CD8-positive, alpha-beta T cell (primary cell): ENCODE measurements at regions of chr4 and their contacts with region 1.

Region 1: DNA sequence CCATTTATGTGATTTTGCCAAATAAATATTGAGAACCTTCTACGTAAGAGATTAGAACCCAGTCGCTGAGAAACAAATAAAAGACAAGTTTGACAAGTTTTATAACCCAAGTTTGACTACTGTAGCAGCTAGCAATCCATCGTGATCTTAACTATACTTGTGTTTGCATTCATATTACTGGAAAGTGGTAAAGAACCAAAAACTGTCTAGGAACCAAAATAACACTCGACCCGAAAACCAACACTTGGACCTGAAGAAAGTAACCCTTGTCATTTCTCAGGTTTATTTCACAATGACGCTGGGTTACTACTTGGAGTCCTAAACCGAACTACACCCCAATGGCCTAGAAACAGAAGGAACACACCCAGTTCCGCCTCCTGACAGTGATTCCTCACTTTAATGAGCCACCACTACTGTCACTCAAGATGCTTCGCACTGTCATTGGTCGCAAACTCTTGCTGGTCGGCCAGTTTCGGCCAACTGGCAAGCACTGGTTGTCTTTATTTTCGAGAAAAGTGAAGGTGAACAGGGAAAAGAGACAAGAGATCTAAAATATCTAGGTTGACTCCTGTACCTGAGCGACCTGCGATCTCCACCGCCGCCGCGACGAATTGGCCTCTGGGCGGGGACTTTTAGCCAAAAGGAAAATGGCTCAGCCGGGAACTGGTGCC is 496 bp downstream of the FBXO8 start:
- DNase-seq: peak; percentile 61 to 94 (median 80)
- ATAC-seq: peak; percentile 93
- H3K4me3 ChIP-seq: peak overlapping the region; percentile 88 to 99
- H3K4me3 Mint-ChIP-seq: peak overlapping the region; percentile 100
- H3K27ac ChIP-seq: peak overlapping the region; percentile 98 to 100
- H3K27ac Mint-ChIP-seq: peak overlapping the region; percentile 100
- H3K4me1 ChIP-seq: peaks cover 14% of the 10 kb centered on the region
- H3K4me1 Mint-ChIP-seq: peaks cover 76% of the 10 kb centered on the region
- H3K27me3 ChIP-seq: no peaks in the 10 kb centered on the region
- H3K27me3 Mint-ChIP-seq: no peaks in the 10 kb centered on the region
- CTCF ChIP-seq: no peak

Region 2: GRCh38 chr4:173370477-173371291 is 912.3 kb before region 1 on chr4 and contains the start of gene SAP30:
- CTCF ChIA-PET with region 1: no interaction called
- POLR2A ChIA-PET with region 1: interaction called, 7 read pairs
- intact Hi-C with region 1: loop called (anchors 5 to 10 kb)
- DNase-seq: peak; percentile 95 to 98 (median 98)
- ATAC-seq: peak; percentile 85
- H3K4me3 ChIP-seq: peak within 1 kb of the TSS; percentile 77 to 93
- H3K4me3 Mint-ChIP-seq: peak within 1 kb of the TSS; percentile 98
- H3K27ac ChIP-seq: peak within 1 kb of the TSS; percentile 78 to 85
- H3K27ac Mint-ChIP-seq: peak within 1 kb of the TSS; percentile 96
- H3K4me1 ChIP-seq: peaks cover 15% of the 10 kb centered on the region
- H3K4me1 Mint-ChIP-seq: peaks cover 34% of the 10 kb centered on the region
- H3K27me3 ChIP-seq: peaks cover 4 to 5% of the 10 kb centered on the region in 2 experiments
- H3K27me3 Mint-ChIP-seq: peaks cover 13% of the 10 kb centered on the region
- CTCF ChIP-seq: no peak
- total RNA-seq, gene SAP30: 3.6 to 3.7 TPM

Region 3: GRCh38 chr4:174260099-174260498 is 22.9 kb before region 1 on chr4:
- CTCF ChIA-PET with region 1: no interaction called
- POLR2A ChIA-PET with region 1: no interaction called
- intact Hi-C with region 1: loop called in 1 of 2 experiments (anchors 2 kb)
- DNase-seq: no peak
- ATAC-seq: no peak
- H3K4me3 ChIP-seq: no peak overlapping the region
- H3K4me3 Mint-ChIP-seq: no peak overlapping the region
- H3K27ac ChIP-seq: no peak overlapping the region
- H3K27ac Mint-ChIP-seq: no peak overlapping the region
- H3K4me1 ChIP-seq: no peaks in the 10 kb centered on the region
- H3K4me1 Mint-ChIP-seq: peaks cover 13% of the 10 kb centered on the region
- H3K27me3 ChIP-seq: no peaks in the 10 kb centered on the region
- H3K27me3 Mint-ChIP-seq: no peaks in the 10 kb centered on the region
- CTCF ChIP-seq: no peak

Region 4: GRCh38 chr4:176195184-176195978 is 1912.4 kb after region 1 on chr4 and contains the start of gene SPATA4:
- CTCF ChIA-PET with region 1: no interaction called
- POLR2A ChIA-PET with region 1: no interaction called
- intact Hi-C with region 1: loop called in 1 of 2 experiments (anchors 2 kb)
- DNase-seq: peak; percentile 89 to 96 (median 94)
- ATAC-seq: peak; percentile 98
- H3K4me3 ChIP-seq: peak within 1 kb of the TSS; percentile 53 to 65
- H3K4me3 Mint-ChIP-seq: peak within 1 kb of the TSS; percentile 86
- H3K27ac ChIP-seq: peak within 1 kb of the TSS; percentile 34 to 66
- H3K27ac Mint-ChIP-seq: peak within 1 kb of the TSS; percentile 86
- H3K4me1 ChIP-seq: peaks cover 4% of the 10 kb centered on the region
- H3K4me1 Mint-ChIP-seq: peaks cover 9% of the 10 kb centered on the region
- H3K27me3 ChIP-seq: peaks cover 0 to 2% of the 10 kb centered on the region in 2 experiments
- H3K27me3 Mint-ChIP-seq: peaks cover 23% of the 10 kb centered on the region
- CTCF ChIP-seq: no peak
- total RNA-seq, gene SPATA4: not detected